Activated naive CD8-positive, alpha-beta T cell treated with anti-CD3 and anti-CD28 coated beads, Interleukin-2, amount 10 ng/mL, durations not matched to agents 7 days and 5 days (primary cell): ENCODE measurements at regions of chr12 and their contacts with region 1.

Region 1: GRCh38 chr12:94101738-94102660 is 46.4 kb upstream of the PLXNC1 start:
- DNase-seq: peak; percentile 79
- ATAC-seq: peak; percentile 83
- H3K4me3 Mint-ChIP-seq: peak overlapping the region; percentile 87
- H3K27ac Mint-ChIP-seq: peak overlapping the region; percentile 87
- H3K4me1 Mint-ChIP-seq: peaks cover 28% of the 10 kb centered on the region
- H3K27me3 Mint-ChIP-seq: peaks cover 18% of the 10 kb centered on the region

Region 2: DNA sequence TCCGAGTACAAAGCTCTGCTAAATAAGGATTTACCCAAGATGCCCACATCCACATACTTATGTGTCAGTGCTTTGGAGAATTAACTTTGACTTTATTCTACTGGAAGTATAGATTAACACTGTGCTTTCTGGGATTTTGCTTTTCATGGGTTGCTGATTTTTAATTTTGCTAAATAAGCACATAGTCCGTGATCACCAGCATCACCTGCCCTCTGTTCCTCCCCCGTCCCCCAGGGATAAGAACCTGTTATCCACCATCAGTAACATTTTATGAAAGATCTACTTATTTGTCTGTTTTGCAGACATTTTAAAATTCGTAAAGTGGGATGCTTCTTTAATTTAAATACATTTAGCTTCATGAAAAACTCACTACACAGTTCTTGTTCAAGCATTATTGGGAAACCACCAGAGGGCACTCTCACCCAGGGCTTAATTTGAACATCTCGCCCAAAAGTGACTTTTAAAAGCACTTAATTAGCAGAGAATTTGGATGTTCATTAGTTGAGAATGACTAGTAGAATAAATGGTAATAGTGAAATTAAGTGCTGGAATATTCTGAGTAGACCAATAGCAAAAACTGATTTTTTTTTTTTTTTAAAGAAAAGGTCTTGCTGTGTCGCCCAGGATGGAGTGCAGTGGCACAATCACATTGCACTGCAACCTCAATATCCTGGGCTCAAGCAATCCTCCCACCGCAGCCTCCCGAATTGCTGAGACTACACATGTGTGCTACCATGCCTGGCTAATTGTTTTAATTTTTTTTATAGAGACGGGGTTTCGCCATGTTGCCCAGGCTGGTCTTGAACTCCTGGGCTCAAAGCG is 599.0 kb before region 1 on chr12:
- POLR2A ChIA-PET with region 1: interaction called, 10 read pairs
- DNase-seq: peak; percentile 38
- ATAC-seq: no peak
- H3K4me3 Mint-ChIP-seq: no peak overlapping the region
- H3K27ac Mint-ChIP-seq: no peak overlapping the region
- H3K4me1 Mint-ChIP-seq: peaks cover 26% of the 10 kb centered on the region
- H3K27me3 Mint-ChIP-seq: no peaks in the 10 kb centered on the region